Activated CD4-positive, alpha-beta memory T cell treated with anti-CD3 and anti-CD28 coated beads, Interleukin-2, amount 10 ng/mL, durations not matched to agents 7 days and 5 days (primary cell): ENCODE measurements at regions of chr21 and their contacts with region 1.

Region 1: GRCh38 chr21:46323227-46324128 is at the start of gene C21orf58:
- DNase-seq: peak; percentile 98
- H3K4me3 Mint-ChIP-seq: peak within 1 kb of the TSS; percentile 84
- H3K27ac Mint-ChIP-seq: peak within 1 kb of the TSS; percentile 93
- H3K4me1 Mint-ChIP-seq: peaks cover 45% of the 10 kb centered on the region
- H3K27me3 Mint-ChIP-seq: no peaks in the 10 kb centered on the region
- total RNA-seq, gene C21orf58: 47.7 to 49.4 TPM

Region 2: GRCh38 chr21:46144464-46145070 is 178.9 kb before region 1 on chr21:
- CTCF ChIA-PET with region 1: interaction called, 11 read pairs
- POLR2A ChIA-PET with region 1: interaction called, 9 read pairs
- DNase-seq: no peak
- H3K4me3 Mint-ChIP-seq: no peak overlapping the region
- H3K27ac Mint-ChIP-seq: no peak overlapping the region
- H3K4me1 Mint-ChIP-seq: peaks cover 14% of the 10 kb centered on the region
- H3K27me3 Mint-ChIP-seq: no peaks in the 10 kb centered on the region

Region 3: DNA sequence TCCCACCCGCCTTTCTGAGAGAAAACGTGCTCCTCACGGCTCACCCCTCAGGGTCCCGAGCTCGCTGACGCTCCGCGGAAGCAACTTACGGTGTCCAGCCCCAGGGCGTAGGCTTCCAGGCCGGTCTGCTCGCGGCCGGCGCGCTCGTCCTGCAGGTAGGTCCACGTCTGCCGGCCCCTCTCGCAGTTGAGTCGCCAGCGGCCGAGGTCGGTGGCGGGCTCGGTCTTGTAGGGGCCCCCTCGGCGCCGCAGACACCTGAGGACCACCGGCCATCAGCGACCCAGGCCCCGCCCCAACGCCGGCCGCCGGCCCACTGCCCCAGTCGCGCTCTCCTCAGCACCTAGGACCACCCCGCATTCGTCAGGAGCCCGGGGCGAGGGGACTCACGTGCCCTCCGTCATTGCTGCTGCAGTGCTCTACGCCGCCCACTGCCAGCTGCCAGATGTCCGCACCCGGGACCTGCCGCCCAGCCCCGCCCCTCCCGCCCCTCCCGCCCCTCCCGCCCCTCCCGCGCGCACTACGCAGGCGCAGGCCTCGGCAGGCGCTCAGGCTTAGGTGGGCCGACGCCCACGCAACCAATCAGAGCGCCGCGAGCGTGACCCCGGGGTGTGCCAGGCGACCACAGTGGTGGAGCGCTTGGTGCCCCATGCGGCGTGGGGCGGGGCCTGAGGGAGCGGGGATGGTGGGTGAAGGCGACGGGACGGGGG is 95.0 kb before region 1 on chr21 and contains the start of gene LSS:
- CTCF ChIA-PET with region 1: interaction called, 3 read pairs
- POLR2A ChIA-PET with region 1: interaction called, 22 read pairs
- DNase-seq: peak; percentile 99
- H3K4me3 Mint-ChIP-seq: peak within 1 kb of the TSS; percentile 85
- H3K27ac Mint-ChIP-seq: peak within 1 kb of the TSS; percentile 79
- H3K4me1 Mint-ChIP-seq: peaks cover 52% of the 10 kb centered on the region
- H3K27me3 Mint-ChIP-seq: no peaks in the 10 kb centered on the region
- total RNA-seq, gene LSS: 54.7 to 56.1 TPM

Region 4: DNA sequence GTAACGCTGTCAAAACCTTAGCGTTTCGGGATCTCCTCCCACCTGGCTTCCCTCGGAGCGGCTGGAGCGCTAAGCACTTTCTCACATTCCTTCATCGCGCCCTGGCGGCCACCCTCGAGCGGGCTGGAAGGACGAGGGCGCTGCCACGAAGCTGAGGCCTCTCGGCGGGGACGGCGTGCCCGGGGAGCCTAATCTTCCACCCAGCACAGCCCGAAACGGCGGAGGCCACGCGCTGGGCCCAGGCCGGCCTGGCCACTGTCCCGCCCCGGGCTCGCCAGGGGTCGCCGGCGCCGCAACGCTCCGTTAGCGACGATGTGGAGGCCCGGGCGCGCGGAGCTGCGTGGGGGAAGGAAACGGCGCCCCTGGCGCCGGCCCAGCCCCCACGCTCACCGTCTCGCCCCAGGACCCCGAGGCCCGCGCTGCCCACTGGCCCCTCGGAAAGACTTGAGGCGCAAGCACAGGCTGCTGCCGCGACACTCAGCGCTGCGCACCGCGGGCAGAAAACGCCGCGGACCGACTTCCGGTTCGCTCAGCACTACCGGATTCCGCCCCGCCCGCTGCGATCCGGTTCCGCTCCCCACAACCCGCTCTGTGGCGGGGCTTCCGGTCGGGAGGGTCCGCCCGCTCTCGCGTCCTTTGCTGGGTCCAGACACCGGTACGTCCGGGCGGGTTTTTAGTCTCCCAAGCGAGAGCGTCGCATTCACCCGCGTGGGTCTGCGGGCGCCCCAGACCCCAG is 37.5 kb before region 1 on chr21 and contains the start of gene YBEY:
- CTCF ChIA-PET with region 1: interaction called, 7 read pairs
- POLR2A ChIA-PET with region 1: interaction called, 37 read pairs
- DNase-seq: peak; percentile 91
- H3K4me3 Mint-ChIP-seq: peak within 1 kb of the TSS; percentile 97
- H3K27ac Mint-ChIP-seq: peak within 1 kb of the TSS; percentile 96
- H3K4me1 Mint-ChIP-seq: peaks cover 61% of the 10 kb centered on the region
- H3K27me3 Mint-ChIP-seq: no peaks in the 10 kb centered on the region
- total RNA-seq, gene YBEY: 10.8 to 12.1 TPM

Region 5: DNA sequence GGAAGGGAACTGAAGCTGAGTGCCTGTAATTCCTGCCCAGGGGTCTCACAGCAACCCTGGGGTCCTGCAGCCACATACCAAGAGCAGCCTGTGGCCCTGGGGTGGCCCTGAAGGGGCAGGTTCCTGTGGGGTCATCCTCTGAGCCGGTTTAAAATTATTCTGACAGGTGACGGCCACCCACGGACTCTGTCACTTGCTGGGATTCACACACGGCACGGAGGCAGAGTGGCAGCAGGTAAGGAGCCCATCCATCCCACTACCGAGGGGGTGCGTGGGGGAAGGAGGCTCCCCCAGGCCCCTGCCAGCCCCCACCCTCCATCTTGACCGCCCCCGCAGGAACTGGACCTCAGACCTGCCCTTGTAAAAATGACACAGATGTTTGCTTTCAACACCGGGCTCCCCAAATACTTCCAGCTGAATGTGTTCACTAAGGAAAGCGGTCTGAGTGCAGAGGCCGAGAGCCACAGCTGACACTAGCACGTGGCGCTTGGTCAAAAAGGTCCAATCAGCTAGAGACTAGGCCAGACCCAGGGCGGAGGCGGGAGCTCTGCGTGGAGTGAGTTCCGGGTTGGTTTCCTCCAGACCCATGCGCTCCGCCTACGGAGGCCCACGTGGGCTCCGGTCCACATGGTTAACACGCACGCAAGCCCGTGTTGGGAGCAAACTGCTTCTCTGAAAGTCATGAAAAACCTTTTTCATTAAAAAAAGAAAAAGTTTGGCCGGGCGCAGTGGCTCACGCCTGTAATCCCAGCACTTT is 27.3 kb before region 1 on chr21:
- CTCF ChIA-PET with region 1: no interaction called
- POLR2A ChIA-PET with region 1: interaction called, 23 read pairs
- DNase-seq: peak; percentile 81
- H3K4me3 Mint-ChIP-seq: peak overlapping the region; percentile 64
- H3K27ac Mint-ChIP-seq: peak overlapping the region; percentile 73
- H3K4me1 Mint-ChIP-seq: peaks cover 28% of the 10 kb centered on the region
- H3K27me3 Mint-ChIP-seq: no peaks in the 10 kb centered on the region

Region 6: GRCh38 chr21:46347791-46348381 is 24.4 kb after region 1 on chr21:
- CTCF ChIA-PET with region 1: no interaction called
- POLR2A ChIA-PET with region 1: no interaction called
- DNase-seq: no peak
- H3K4me3 Mint-ChIP-seq: no peak overlapping the region
- H3K27ac Mint-ChIP-seq: no peak overlapping the region
- H3K4me1 Mint-ChIP-seq: no peaks in the 10 kb centered on the region
- H3K27me3 Mint-ChIP-seq: no peaks in the 10 kb centered on the region